Activated CD4-positive, alpha-beta T cell treated with anti-CD3 and anti-CD28 coated beads, Interleukin-2, amount 10 ng/mL, durations not matched to agents 24 days and 14 days (primary cell): ENCODE measurements at regions of chr6 and their contacts with region 1.

Region 1: GRCh38 chr6:105992315-105992961 is 93.7 kb upstream of the PRDM1 start:
- DNase-seq: peak; percentile 98
- H3K4me3 Mint-ChIP-seq: peak overlapping the region; percentile 93
- H3K27ac Mint-ChIP-seq: peak overlapping the region; percentile 91
- H3K4me1 Mint-ChIP-seq: peaks cover 45% of the 10 kb centered on the region
- H3K27me3 Mint-ChIP-seq: peaks cover 37% of the 10 kb centered on the region

Region 2: GRCh38 chr6:105484238-105485161 is 507.9 kb before region 1 on chr6:
- intact Hi-C with region 1: loop called (anchors 5 kb)
- DNase-seq: peak; percentile 63
- H3K4me3 Mint-ChIP-seq: no peak overlapping the region
- H3K27ac Mint-ChIP-seq: peak overlapping the region; percentile 26
- H3K4me1 Mint-ChIP-seq: peaks cover 41% of the 10 kb centered on the region
- H3K27me3 Mint-ChIP-seq: peaks cover 6% of the 10 kb centered on the region

Region 3: DNA sequence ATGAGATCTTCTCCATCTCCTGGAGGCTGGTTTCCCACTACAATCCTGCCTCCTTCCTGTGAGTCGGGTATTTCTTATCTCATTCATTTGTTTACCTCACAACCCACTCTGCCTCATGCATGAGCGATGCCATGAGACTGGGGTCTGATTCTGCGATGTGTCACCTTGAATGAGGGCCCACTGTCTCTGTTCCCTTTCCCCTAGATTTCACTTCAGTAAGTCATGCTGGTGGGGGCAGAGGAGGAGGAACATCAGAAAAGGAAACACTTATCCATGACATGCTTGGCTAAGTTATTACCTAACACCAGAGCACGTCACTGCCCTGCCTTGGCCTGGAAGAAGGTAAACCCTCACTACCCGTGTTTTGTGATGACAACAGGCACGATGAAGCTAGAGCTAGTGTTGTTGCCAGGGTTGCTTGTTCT is 243.7 kb before region 1 on chr6:
- intact Hi-C with region 1: loop called (anchors 5 kb)
- DNase-seq: no peak
- H3K4me3 Mint-ChIP-seq: no peak overlapping the region
- H3K27ac Mint-ChIP-seq: peak overlapping the region; percentile 39
- H3K4me1 Mint-ChIP-seq: peaks cover 44% of the 10 kb centered on the region
- H3K27me3 Mint-ChIP-seq: peaks cover 3% of the 10 kb centered on the region

Region 4: DNA sequence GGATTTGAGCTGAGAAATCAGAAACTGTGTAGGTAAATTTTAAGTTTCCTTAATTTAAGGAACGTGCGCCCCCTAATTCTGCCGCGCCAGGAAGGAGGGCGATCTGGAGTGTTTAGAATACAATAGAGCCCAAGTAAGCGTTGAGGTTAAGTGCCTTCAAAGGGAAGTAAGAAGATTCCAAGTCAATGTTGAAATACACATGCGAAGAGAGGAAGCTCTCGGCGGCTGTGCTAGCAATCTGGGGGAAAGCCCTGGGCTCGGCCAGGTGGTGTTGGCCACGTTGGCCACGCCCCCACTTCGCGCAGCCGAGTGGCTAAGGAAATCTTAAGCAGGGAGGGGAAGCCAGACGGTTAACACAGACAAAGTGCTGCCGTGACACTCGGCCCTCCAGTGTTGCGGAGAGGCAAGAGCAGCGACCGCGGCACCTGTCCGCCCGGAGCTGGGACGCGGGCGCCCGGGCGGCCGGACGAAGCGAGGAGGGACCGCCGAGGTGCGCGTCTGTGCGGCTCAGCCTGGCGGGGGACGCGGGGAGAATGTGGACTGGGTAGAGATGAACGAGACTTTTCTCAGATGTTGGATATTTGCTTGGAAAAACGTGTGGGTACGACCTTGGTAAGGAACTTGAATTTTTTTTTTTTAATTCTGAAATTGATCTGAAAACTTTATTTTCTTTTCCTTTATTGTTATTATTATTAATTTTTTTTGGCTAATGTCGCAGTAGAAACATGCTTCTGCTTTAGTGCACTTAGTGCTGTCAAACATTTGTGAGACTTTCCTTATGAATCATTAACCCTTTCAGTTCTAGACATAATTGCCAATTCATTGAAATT is 93.8 kb after region 1 on chr6 and contains the start of gene PRDM1:
- intact Hi-C with region 1: loop called (anchors 1 kb)
- DNase-seq: peak; percentile 95
- H3K4me3 Mint-ChIP-seq: peak within 1 kb of the TSS; percentile 93
- H3K27ac Mint-ChIP-seq: peak within 1 kb of the TSS; percentile 87
- H3K4me1 Mint-ChIP-seq: peaks cover 72% of the 10 kb centered on the region
- H3K27me3 Mint-ChIP-seq: peaks cover 10% of the 10 kb centered on the region
- total RNA-seq, gene PRDM1: 35.9 and 37.4 TPM in 2 replicates

Region 5: DNA sequence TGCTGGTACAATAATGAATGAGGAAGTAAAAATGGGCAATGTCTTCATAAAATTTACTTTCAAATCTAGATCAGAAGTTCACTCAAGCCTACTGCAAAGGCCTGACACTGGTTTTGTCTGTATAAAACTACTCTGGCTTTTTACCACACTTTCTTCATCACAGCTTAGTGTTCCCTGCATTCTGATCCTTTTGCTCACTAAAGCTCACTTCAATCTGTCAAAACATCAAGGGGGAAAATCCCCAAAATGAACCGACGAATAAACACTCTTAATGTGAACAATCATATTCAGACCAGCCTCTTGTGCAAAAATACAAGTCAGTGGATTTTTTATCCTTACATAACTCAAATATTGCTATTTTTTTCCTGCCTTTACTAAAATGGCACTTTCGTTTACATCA is 192.2 kb after region 1 on chr6:
- intact Hi-C with region 1: loop called (anchors 5 kb)
- DNase-seq: peak; percentile 49
- H3K4me3 Mint-ChIP-seq: no peak overlapping the region
- H3K27ac Mint-ChIP-seq: no peak overlapping the region
- H3K4me1 Mint-ChIP-seq: peaks cover 47% of the 10 kb centered on the region
- H3K27me3 Mint-ChIP-seq: no peaks in the 10 kb centered on the region

Region 6: GRCh38 chr6:106300944-106301343 is 308.5 kb after region 1 on chr6:
- intact Hi-C with region 1: loop called (anchors 10 kb)
- DNase-seq: no peak
- H3K4me3 Mint-ChIP-seq: no peak overlapping the region
- H3K27ac Mint-ChIP-seq: no peak overlapping the region
- H3K4me1 Mint-ChIP-seq: peaks cover 10% of the 10 kb centered on the region
- H3K27me3 Mint-ChIP-seq: no peaks in the 10 kb centered on the region